Cardiac septum (tissue), 1 donor: ENCODE measurements at regions of chr1 and their contacts with region 1.

Region 1: GRCh38 chr1:111904478-111905218 is 84.8 kb downstream of the KCND3 start:
- DNase-seq: peak; percentile 76

Region 2: GRCh38 chr1:111955755-111956154 is 51.1 kb after region 1 on chr1:
- intact Hi-C with region 1: loop called (anchors 5 kb)
- DNase-seq: no peak